ENCODE measurements at regions of chr10 and their contacts with region 1.

Region 1: DNA sequence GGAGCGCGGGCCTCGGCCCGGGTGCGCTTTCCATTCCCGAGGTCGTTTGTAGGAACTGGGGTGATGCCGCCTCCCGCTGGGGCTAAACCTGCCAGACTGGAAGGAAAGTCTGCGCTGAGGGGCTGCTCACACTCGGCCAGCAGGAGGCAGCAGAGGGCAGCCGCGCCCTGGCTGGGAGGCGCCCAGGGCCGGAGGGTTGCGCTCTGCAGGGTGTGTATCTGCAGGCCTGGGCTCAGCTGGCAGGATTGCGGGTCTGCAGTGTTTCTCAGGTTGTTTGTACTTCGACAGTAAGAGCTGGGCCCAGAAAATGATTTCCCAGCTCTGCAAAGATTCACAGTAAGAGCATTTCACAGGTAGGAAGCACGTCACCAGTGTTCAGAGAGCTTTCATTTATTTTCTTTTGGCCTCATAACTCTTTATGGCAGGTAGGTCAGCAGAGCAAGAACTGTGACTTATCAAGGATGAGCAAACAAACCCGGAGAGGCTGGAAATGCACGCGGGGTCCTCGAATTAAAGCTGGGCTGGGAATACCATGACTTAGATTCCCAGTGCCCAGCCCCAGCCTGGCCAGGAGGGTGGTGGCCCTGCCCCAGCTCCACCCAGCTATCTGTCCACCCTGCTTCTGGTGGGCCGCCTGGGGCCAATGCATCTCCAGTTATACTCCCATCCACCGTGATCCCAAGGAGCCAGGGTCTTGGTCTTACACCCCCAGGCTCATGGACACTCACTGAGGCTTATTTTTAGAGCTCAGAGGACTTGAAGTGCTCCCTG is 15.2 kb upstream of the PPP2R2D start:
- DNase-seq: peak; percentile 44 to 85
- H3K4me3 ChIP-seq: no peak overlapping the region
- H3K4me1 ChIP-seq: peaks cover 6% of the 10 kb centered on the region; the same call in 1 of the 2 replicates
- H3K27me3 ChIP-seq: no peaks in the 10 kb centered on the region

Region 2: DNA sequence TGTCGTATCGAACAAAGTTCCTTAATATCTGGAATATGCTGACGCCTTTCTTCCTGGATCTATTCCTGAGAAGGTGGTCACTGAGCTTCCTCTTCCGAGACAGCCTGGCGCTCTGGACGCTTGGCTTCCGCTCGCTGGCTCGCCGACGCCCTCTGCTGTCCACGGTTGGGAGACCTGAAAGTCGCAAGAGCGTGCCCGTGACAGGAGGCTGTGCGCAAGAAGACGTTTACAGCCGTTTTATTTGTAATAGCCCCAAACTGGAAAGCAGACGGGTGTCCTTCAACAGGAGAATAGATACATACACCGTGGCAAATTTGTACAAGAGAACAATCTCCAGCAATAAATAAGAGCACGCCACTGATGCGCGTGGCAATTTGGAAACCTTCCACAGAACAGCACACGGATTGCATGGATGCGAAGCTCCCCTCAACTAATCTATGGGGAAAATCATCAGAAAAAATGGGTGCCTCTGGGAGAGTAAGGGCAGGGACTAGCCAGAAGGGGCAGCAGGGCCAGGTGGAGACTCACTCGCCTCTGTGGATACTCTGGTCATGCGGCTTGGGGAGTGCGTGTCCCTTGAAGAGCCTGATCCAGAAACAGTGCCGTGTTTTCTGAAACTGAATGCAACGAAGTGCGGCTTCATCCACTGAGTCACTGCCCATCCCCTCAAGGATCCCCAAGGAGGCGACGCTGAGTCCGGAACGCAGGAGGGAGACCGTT is 137.7 kb after region 1 on chr10:
- in situ Hi-C with region 1: loop called (anchors 5 kb)
- DNase-seq: peak; percentile 40 to 89
- H3K4me3 ChIP-seq: no peak overlapping the region
- H3K4me1 ChIP-seq: no peaks in the 10 kb centered on the region
- H3K27me3 ChIP-seq: peaks cover 21% of the 10 kb centered on the region

Region 3: DNA sequence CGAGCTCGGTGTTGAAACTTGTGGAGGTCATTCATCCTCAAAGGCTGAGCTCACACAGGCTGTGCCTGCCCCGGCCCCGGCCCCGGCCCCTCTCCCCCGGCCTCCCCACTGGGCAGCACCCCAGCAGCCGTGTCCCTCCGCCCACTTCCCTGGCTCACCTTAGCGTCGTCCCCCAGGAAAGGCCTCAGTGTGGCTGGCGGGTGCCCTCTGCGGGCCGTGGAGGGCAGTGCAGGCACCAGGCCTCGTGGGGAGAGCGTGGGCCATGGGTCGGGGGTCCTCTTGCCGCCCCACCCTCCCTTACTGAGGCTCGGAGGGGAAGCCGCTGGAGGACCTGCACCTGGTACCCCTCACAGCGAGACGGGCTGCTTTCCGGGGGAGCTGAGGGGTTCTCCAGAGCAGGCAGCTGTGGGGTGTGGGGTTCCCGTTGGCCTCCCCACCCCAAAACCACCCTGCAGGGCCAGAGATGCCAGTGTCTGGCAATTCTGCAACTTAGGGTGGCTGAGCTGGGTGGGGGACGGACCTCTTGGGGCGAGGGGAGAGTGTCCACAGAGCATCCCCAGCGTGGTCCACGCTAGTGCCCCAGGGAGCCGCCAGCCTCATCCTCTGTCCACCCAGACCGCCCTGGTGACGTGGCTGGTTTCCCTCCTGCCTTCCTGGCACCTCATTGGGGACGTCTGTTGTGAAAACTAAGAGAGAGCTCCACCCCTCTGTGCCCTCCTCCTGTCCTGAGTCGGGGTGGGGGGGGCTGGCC is 257.0 kb after region 1 on chr10:
- in situ Hi-C with region 1: loop called (anchors 10 kb)
- DNase-seq: peak; percentile 25 to 78
- H3K4me3 ChIP-seq: no peak overlapping the region
- H3K4me1 ChIP-seq: no peaks in the 10 kb centered on the region
- H3K27me3 ChIP-seq: no peaks in the 10 kb centered on the region

Region 4: GRCh38 chr10:132307823-132308587 is 422.4 kb after region 1 on chr10 and contains the start of gene STK32C:
- in situ Hi-C with region 1: no loop called
- DNase-seq: peak; percentile 80 to 93
- H3K4me3 ChIP-seq: peak within 1 kb of the TSS; percentile 60
- H3K4me1 ChIP-seq: peaks cover 10% of the 10 kb centered on the region
- H3K27me3 ChIP-seq: no peaks in the 10 kb centered on the region

Measured in HAP-1 (cell line).